ENCODE measurements at regions of chr3 and their contacts with region 1.

Region 1: GRCh38 chr3:178385280-178385952 is 150.8 kb upstream of the KCNMB2 start:
- DNase-seq: peak in 1 of 2 experiments; percentile 31
- H3K4me3 ChIP-seq: no peak overlapping the region
- H3K27ac ChIP-seq: no peak overlapping the region
- H3K4me1 ChIP-seq: peaks cover 26% of the 10 kb centered on the region
- H3K27me3 ChIP-seq: no peaks in the 10 kb centered on the region
- CTCF ChIP-seq: peak; percentile 98

Region 2: DNA sequence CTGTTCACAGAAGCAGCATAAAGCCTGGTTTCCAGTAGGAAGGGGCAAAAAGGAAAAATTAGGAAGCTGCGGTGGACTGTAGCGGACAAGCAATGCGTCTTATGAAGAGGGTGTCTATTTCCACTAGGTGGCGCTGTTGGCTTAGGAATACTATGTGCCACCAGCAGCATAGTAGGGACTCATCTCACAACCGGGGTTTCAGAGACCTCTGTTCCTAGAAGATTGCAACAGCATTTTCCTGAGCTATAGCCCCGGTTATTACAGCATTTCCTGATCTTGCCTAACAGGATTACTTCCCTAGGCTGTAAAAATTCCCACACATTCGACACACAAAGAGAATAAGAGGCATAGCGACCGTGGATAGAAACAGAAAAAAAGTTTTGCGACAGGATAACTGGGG is 1871.1 kb before region 1 on chr3:
- CTCF ChIA-PET with region 1: interaction called, 3 read pairs
- POLR2A ChIA-PET with region 1: no interaction called
- intact Hi-C with region 1: loop called (anchors 10 kb)
- DNase-seq: peak; percentile 25 to 43
- H3K4me3 ChIP-seq: no peak overlapping the region
- H3K27ac ChIP-seq: no peak overlapping the region
- H3K4me1 ChIP-seq: no peaks in the 10 kb centered on the region
- H3K27me3 ChIP-seq: no peaks in the 10 kb centered on the region
- CTCF ChIP-seq: peak; percentile 93

Region 3: DNA sequence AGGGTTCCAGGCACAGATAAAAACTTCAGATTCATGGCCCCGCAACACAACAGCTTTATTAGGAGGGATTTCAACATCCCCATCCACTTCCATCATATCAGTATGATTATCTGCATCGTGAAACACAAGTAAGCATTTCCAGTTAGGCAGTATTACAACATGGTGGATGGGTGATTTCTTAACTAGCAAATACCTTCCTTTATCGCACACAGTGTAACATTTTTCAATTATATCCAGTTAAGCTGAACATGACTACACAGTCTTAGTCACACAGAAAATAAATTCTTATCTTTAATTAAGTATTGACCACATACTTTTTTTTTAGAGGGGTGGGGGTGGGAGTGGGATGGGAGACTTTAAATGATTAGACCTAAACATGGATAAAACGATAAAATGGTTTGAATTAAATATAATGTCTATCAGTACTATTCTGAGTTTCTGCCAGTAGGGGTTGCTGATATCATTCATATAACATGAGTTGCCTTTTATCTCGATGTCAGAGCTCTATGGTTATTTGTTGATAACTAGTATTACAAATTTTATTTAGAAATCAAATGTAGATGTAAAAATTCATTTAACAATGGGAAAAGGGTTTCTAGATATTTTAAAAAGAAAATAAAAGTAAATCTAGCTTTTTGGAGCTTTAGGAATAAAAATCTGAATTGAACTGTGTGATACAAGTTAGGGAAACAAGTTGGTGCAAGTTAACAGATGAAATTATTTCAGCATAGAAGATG is 1334.7 kb before region 1 on chr3:
- CTCF ChIA-PET with region 1: interaction called, 18 read pairs
- POLR2A ChIA-PET with region 1: no interaction called
- intact Hi-C with region 1: loop called (anchors 1 kb)
- DNase-seq: peak in 1 of 2 experiments; percentile 59
- H3K4me3 ChIP-seq: no peak overlapping the region
- H3K27ac ChIP-seq: peak overlapping the region; percentile 40
- H3K4me1 ChIP-seq: peaks cover 15% of the 10 kb centered on the region
- H3K27me3 ChIP-seq: no peaks in the 10 kb centered on the region
- CTCF ChIP-seq: peak; percentile 90

Region 4: DNA sequence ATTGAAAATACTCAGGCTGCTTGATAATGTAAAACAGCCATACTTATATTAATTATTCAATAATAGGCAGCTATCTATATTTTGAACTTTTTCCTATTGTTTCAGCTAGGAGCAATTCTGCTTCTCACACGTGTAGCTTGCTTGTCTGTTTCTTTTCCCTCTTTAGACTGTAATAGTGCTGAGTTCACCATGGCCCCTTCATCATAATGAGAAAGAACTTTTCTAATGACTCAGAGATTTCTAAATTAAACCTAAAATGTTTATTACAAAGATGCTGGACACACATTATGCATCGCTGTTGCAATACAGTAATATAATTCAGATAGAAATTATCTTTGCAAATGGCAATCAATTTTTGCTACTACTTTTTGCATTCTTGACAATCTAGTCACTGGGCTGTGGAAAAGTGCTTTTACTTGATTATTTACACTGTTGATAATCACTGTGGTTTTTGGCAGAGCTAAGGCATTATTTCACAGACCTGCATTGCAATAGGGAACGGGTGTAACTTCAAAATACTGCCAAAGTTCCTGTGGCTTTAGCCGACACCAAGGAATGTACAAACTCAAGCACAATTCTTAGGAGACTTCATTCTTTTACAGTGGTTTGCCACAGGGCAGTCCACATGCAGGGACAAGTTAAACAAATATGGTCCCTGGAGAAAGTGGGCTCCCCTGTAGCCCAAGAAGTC is 907.1 kb before region 1 on chr3:
- CTCF ChIA-PET with region 1: no interaction called
- POLR2A ChIA-PET with region 1: no interaction called
- intact Hi-C with region 1: loop called (anchors 10 kb)
- DNase-seq: peak; percentile 84 to 100
- H3K4me3 ChIP-seq: no peak overlapping the region
- H3K27ac ChIP-seq: peak overlapping the region; percentile 85
- H3K4me1 ChIP-seq: peaks cover 33% of the 10 kb centered on the region
- H3K27me3 ChIP-seq: no peaks in the 10 kb centered on the region
- CTCF ChIP-seq: no peak

Region 5: GRCh38 chr3:177615015-177615414 is 770.4 kb before region 1 on chr3:
- CTCF ChIA-PET with region 1: no interaction called
- POLR2A ChIA-PET with region 1: no interaction called
- intact Hi-C with region 1: loop called (anchors 5 kb)
- DNase-seq: peak; percentile 84 to 96
- H3K4me3 ChIP-seq: no peak overlapping the region
- H3K27ac ChIP-seq: peak overlapping the region; percentile 62
- H3K4me1 ChIP-seq: peaks cover 87% of the 10 kb centered on the region
- H3K27me3 ChIP-seq: no peaks in the 10 kb centered on the region
- CTCF ChIP-seq: no peak

Region 6: DNA sequence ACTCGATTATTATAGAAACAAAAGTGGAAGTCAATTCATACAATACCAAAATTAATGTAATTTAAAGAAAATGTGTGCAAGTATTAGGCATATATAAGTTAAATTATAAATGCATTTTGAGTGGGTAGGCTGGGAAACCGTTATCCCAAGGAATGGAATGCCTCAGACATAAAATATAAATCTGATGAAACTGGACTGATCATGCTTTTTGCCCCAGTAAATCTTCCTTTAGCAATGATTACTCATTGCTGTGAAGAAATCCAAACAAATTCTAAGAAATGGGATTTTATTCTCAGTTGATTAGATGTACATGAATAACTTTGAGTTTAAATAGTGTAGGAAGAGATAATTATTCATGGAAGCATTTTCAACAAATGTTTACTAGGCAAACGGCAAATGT is 34.7 kb before region 1 on chr3:
- CTCF ChIA-PET with region 1: no interaction called
- POLR2A ChIA-PET with region 1: interaction called, 13 read pairs
- intact Hi-C with region 1: no loop called
- DNase-seq: no peak
- H3K4me3 ChIP-seq: no peak overlapping the region
- H3K27ac ChIP-seq: no peak overlapping the region
- H3K4me1 ChIP-seq: no peaks in the 10 kb centered on the region
- H3K27me3 ChIP-seq: no peaks in the 10 kb centered on the region
- CTCF ChIP-seq: no peak

Region 7: GRCh38 chr3:178419071-178419470 is 33.7 kb after region 1 on chr3:
- CTCF ChIA-PET with region 1: no interaction called
- POLR2A ChIA-PET with region 1: no interaction called
- intact Hi-C with region 1: no loop called
- DNase-seq: no peak
- H3K4me3 ChIP-seq: no peak overlapping the region
- H3K27ac ChIP-seq: no peak overlapping the region
- H3K4me1 ChIP-seq: no peaks in the 10 kb centered on the region
- H3K27me3 ChIP-seq: no peaks in the 10 kb centered on the region
- CTCF ChIP-seq: no peak